A549 (cell line): ENCODE measurements at regions of chr17 and their contacts with region 1.

Region 1: DNA sequence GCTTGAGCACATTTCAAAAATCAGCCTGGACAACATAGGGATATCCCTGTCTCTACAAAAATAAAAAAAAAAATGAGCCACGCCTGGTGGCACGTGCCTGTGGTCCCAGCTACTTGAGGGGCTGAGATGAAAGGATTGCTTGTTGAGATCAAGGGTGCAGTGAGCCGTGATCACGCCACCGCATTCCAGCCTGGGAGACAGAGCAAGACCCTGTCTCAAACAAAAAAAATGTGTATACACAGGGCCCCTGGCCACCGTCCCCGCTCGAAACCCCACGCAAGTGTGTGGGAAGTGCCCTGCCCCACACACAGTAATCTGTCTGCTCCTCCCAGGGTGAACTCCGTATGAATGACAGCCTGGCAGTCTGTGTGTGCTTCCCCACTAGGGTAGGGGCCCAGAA is 93.0 kb upstream of the RPL38 start:
- DNase-seq: no peak
- ATAC-seq: no peak
- H3K4me3 ChIP-seq: no peak overlapping the region
- H3K27ac ChIP-seq: no peak overlapping the region
- H3K4me1 ChIP-seq: no peaks in the 10 kb centered on the region
- CTCF ChIP-seq: no peak
- EP300 ChIP-seq: no peak
- POLR2A ChIP-seq: no peak
- RAD21 ChIP-seq: no peak

Region 2: DNA sequence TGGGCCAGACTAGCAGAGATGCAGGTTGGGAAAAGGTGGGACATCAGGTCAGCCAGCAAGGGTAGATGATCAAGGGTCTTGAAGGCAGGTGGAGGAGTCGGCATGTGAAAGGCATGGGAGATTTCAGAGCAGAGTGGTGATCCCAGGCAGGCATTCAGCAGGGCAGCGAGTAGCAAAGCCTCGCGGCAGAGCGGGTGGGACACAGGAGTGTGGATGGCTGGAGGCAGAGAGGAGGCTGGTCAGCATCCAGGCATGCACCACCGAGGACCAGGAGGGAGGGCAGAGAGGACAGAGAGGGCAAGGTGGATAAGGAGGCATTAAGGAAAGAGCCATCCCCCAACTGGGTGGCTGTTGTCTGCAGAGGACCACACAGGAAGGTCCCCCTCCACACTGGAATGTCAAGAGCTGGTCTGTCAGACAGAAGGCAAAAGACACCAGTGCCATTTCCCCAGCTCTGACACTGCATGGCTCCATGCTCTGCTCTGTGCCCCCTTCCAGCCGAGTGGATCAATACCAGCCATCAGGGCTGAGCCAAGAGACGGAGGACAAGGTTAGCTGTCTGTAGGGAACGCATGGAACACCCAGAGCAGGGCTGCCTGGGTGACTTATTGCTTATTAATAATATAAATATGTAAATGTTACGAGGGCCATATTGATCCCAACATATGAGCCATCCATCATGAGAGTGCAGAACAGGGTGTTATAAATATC is 18.2 kb after region 1 on chr17:
- CTCF ChIA-PET with region 1: interaction called, 11 read pairs
- POLR2A ChIA-PET with region 1: no interaction called
- DNase-seq: no peak
- ATAC-seq: no peak
- H3K4me3 ChIP-seq: no peak overlapping the region
- H3K27ac ChIP-seq: no peak overlapping the region
- H3K4me1 ChIP-seq: peaks cover 2% of the 10 kb centered on the region; the same call in 1 of the 3 replicates
- CTCF ChIP-seq: no peak
- EP300 ChIP-seq: no peak
- POLR2A ChIP-seq: no peak
- RAD21 ChIP-seq: no peak

Region 3: DNA sequence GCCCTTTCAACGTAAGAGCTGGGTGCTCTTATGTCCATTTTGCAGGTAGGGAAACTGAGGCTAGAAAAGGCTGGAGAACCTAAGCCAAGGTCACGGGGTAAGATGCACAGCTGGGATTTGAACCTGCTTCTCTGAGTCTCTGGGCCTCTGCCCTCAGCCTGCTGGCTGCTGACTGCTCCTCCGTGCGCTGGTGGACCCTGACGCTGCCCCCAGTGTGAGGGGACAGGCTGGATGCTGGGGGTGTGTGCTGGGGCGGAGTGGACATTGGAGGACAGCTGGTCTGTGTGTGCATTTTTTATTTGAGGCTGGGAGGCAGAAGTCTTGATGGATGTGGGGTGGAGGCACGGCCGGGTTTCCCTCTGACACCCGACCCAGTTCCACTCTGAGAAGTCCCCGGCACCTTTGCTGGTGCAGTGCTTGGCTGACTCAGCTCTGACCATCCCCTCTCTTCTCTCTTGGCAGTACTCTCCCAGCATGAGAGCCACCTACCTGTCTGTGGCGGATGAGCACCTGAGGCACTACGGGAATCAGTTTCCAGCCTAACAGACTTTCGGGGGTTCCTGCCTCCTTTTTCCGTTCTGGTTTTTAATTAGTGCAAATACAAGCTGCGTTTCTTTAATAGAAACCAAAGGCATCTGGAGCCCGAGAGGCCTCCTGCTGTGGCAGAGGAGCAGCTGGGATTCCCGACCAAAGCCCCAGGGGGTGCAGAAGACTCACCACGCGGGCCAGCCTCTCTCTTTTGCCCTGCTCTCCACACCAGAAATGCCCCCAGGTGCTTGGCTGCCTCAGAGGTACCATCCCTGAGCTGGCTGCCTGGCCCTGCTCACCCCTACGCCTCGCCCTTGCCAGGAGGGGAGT is 149.4 kb after region 1 on chr17:
- CTCF ChIA-PET with region 1: no interaction called
- POLR2A ChIA-PET with region 1: no interaction called
- DNase-seq: no peak
- ATAC-seq: peak; percentile 54 to 59; a peak in 4 of 6 replicates
- H3K4me3 ChIP-seq: no peak overlapping the region
- H3K27ac ChIP-seq: no peak overlapping the region
- H3K4me1 ChIP-seq: no peaks in the 10 kb centered on the region
- CTCF ChIP-seq: no peak
- EP300 ChIP-seq: no peak
- POLR2A ChIP-seq: no peak
- RAD21 ChIP-seq: no peak